ENCODE measurements at regions of chr12 and their contacts with region 1.

Region 1: GRCh38 chr12:70719672-70720420 is 82.6 kb upstream of the PTPRB start:
- DNase-seq: peak; percentile 23
- H3K4me3 ChIP-seq: peak overlapping the region; percentile 55
- H3K27ac ChIP-seq: peak overlapping the region; percentile 86
- H3K4me1 ChIP-seq: peaks cover 44% of the 10 kb centered on the region
- H3K27me3 ChIP-seq: no peaks in the 10 kb centered on the region
- CTCF ChIP-seq: peak; percentile 92

Region 2: GRCh38 chr12:69880571-69880970 is 839.3 kb before region 1 on chr12:
- intact Hi-C with region 1: loop called (anchors 5 kb)
- DNase-seq: no peak
- H3K4me3 ChIP-seq: no peak overlapping the region
- H3K27ac ChIP-seq: no peak overlapping the region
- H3K4me1 ChIP-seq: peaks cover 5% of the 10 kb centered on the region
- H3K27me3 ChIP-seq: peaks cover 4% of the 10 kb centered on the region
- CTCF ChIP-seq: no peak

Region 3: DNA sequence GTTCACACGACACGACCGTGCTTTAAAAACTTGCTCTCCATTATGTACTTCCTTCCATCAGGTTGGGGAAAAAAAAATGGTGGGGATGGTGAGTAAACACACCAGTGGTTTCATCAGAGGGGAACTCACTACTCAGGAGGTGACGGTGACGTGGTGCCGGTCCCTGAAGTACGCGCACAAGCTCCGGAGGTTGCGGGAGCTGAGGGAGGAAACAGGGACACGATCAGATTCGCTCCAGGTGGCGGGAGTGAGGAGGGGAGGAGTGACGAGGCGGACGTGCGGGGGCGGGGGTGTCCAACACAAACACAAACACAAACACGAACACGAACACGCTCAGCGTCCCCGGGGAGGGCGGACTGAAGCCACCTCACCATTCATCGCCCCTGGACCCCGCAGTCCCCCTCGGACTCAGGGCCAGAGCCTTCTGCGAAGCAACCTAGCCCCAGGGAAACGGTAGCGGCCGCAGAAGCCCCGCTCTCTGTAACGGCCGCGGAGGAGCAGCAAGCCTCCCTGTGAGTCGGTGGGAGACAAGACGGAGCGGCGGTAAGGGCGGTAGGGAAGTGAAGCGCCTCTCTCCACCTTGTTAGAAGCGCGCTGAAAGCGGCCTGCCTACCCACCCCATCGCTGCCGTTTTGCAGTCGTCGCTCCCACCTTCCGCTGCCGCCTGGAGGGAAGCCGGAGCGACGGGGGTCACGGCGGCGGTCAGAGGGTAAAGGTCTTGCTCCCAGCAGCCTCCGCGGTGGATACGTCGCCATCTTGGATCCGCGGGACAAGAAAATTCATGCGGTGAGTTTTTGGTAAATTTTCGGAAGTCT is 476.9 kb before region 1 on chr12 and contains the start of gene CNOT2:
- intact Hi-C with region 1: loop called (anchors 10 kb)
- DNase-seq: peak; percentile 92
- H3K4me3 ChIP-seq: peak within 1 kb of the TSS; percentile 89
- H3K27ac ChIP-seq: peak within 1 kb of the TSS; percentile 96
- H3K4me1 ChIP-seq: peaks cover 74% of the 10 kb centered on the region
- H3K27me3 ChIP-seq: no peaks in the 10 kb centered on the region
- CTCF ChIP-seq: no peak
- total RNA-seq, gene CNOT2: 33.0 TPM

Region 4: DNA sequence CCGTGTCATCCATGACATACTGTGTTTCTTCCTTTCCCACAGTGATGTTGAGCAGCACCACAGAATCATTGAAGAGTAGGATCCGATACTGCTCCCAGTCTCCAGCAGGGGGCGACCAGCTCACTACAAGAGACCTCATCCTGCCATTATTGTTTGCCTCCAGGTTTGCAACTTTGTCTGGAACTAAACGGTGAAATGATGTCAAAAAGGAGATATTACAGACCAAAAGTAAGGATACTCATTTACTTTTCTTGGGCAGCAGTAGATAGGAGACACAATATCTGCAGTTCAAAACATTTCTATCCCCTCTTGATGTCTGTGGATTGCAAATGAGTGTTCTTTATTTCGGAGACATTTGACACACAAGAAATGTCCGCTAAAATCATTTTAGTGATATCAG is 129.8 kb before region 1 on chr12:
- intact Hi-C with region 1: loop called (anchors 2 kb)
- DNase-seq: peak; percentile 73
- H3K4me3 ChIP-seq: no peak overlapping the region
- H3K27ac ChIP-seq: peak overlapping the region; percentile 17
- H3K4me1 ChIP-seq: peaks cover 10% of the 10 kb centered on the region
- H3K27me3 ChIP-seq: no peaks in the 10 kb centered on the region
- CTCF ChIP-seq: peak; percentile 90

Region 5: DNA sequence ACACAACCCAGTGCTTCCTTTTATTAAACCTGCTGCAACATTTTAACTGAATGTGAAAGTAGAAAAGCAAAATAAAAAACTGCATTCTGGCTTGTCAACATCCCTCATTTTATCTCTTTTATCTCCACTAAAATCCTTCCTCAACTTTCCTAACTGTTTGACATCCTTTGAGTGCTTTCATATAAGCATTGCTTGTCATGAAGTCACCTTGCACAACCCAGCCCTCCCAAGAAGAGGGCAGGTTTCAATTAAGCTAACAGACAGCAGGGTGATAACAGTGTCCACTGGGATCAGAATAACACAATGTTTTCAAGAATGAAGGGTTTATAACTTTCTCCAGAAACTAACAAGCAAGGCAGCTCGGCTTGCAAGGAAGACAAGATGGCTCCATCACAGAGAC is 454.3 kb after region 1 on chr12:
- intact Hi-C with region 1: no loop called
- DNase-seq: no peak
- H3K4me3 ChIP-seq: no peak overlapping the region
- H3K27ac ChIP-seq: no peak overlapping the region
- H3K4me1 ChIP-seq: no peaks in the 10 kb centered on the region
- H3K27me3 ChIP-seq: no peaks in the 10 kb centered on the region
- CTCF ChIP-seq: no peak

Region 6: GRCh38 chr12:71315328-71315985 is 595.6 kb after region 1 on chr12:
- intact Hi-C with region 1: no loop called
- DNase-seq: no peak
- H3K4me3 ChIP-seq: no peak overlapping the region
- H3K27ac ChIP-seq: no peak overlapping the region
- H3K4me1 ChIP-seq: no peaks in the 10 kb centered on the region
- H3K27me3 ChIP-seq: no peaks in the 10 kb centered on the region
- CTCF ChIP-seq: no peak